SK-N-SH (cell line): ENCODE measurements at regions of chr7 and their contacts with region 1.

Region 1: GRCh38 chr7:12458520-12459131 is 55.0 kb upstream of the VWDE start:
- DNase-seq: peak; percentile 68
- H3K4me3 ChIP-seq: no peak overlapping the region
- H3K27ac ChIP-seq: no peak overlapping the region
- H3K4me1 ChIP-seq: no peaks in the 10 kb centered on the region; a peak in 1 of 4 replicates
- H3K27me3 ChIP-seq: no peaks in the 10 kb centered on the region
- CTCF ChIP-seq: peak; percentile 97
- EP300 ChIP-seq: no peak
- RAD21 ChIP-seq: peak; percentile 93

Region 2: GRCh38 chr7:12423355-12423994 is 35.2 kb before region 1 on chr7:
- CTCF ChIA-PET with region 1: interaction called, 13 read pairs
- POLR2A ChIA-PET with region 1: no interaction called
- DNase-seq: no peak
- H3K4me3 ChIP-seq: no peak overlapping the region
- H3K27ac ChIP-seq: no peak overlapping the region
- H3K4me1 ChIP-seq: peaks cover 0 to 3% of the 10 kb centered on the region in 2 experiments; a peak in 1 of 4 replicates
- H3K27me3 ChIP-seq: no peaks in the 10 kb centered on the region
- CTCF ChIP-seq: no peak
- EP300 ChIP-seq: no peak
- RAD21 ChIP-seq: no peak

Region 3: GRCh38 chr7:12444785-12445184 is 13.8 kb before region 1 on chr7:
- CTCF ChIA-PET with region 1: interaction called, 68 read pairs
- POLR2A ChIA-PET with region 1: no interaction called
- DNase-seq: no peak
- H3K4me3 ChIP-seq: no peak overlapping the region
- H3K27ac ChIP-seq: no peak overlapping the region
- H3K4me1 ChIP-seq: no peaks in the 10 kb centered on the region
- H3K27me3 ChIP-seq: no peaks in the 10 kb centered on the region
- CTCF ChIP-seq: no peak
- EP300 ChIP-seq: no peak
- RAD21 ChIP-seq: no peak

Region 4: DNA sequence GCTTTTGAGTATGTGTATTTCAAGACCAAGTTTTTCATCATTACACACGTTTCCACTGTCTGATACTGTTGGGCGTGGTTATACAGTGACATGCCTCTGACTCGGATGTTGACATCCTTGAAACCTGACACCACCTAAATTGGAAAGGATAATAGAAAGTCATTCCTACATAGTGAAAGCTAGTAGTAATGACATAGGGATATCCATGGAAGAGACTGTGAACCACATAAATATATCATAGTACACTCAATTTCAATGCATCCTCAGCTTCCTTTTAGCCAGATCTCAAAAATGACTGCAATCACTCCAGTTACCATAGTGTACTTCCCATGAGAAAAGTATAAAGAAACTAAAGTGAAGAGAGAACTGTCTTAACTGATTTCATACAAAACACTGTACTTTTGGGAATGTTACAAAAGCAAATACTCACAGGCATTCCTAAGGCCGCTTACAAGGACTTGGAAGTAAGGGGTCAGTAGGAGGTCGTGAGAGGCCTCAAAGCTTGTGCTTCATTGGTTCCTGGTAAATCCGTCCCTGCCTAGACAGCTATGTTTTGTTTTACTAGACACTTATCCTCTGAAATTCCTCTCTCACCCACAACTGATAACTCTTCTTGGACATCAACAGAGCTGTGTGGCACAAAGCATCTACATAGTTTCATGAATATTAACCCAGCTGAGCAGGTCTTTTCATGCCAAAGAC is 16.9 kb after region 1 on chr7:
- CTCF ChIA-PET with region 1: interaction called, 160 read pairs
- POLR2A ChIA-PET with region 1: no interaction called
- DNase-seq: no peak
- H3K4me3 ChIP-seq: no peak overlapping the region
- H3K27ac ChIP-seq: no peak overlapping the region
- H3K4me1 ChIP-seq: no peaks in the 10 kb centered on the region
- H3K27me3 ChIP-seq: no peaks in the 10 kb centered on the region; the same call in 1 of the 2 replicates
- CTCF ChIP-seq: no peak
- EP300 ChIP-seq: no peak
- RAD21 ChIP-seq: no peak

Region 5: DNA sequence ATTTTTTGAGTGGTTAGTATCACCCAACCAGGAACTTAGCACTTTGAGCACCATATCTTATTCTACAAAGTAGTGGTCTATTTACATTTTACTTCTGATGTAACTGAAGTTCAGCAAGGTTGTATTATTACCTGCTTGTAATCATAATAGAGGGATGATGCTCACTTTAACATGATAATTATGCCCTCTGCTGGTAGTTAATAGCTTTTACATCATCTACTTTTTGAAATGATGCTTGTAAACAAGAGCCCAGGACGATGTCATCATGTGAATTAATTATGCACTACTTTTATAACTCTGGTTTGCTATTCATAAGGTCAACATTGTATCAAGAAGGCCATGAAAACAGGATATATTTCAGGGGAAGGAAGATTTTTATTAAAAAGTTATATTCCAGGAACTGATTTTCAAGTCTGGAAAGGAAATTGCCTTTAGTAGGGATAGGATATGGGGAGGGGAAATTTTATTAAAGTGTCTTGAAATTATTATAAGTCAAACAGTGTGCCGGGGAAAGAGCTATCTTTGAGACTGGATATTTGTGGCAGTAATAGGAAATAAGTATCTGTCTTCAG is 31.6 kb after region 1 on chr7:
- CTCF ChIA-PET with region 1: interaction called, 153 read pairs
- POLR2A ChIA-PET with region 1: no interaction called
- DNase-seq: peak; percentile 59
- H3K4me3 ChIP-seq: no peak overlapping the region
- H3K27ac ChIP-seq: no peak overlapping the region
- H3K4me1 ChIP-seq: no peaks in the 10 kb centered on the region; a peak in 1 of 4 replicates
- H3K27me3 ChIP-seq: no peaks in the 10 kb centered on the region
- CTCF ChIP-seq: peak; percentile 82
- EP300 ChIP-seq: no peak
- RAD21 ChIP-seq: peak; percentile 74

Region 6: GRCh38 chr7:12518920-12519681 is 60.5 kb after region 1 on chr7:
- CTCF ChIA-PET with region 1: interaction called, 17 read pairs
- POLR2A ChIA-PET with region 1: no interaction called
- DNase-seq: peak; percentile 35
- H3K4me3 ChIP-seq: no peak overlapping the region
- H3K27ac ChIP-seq: no peak overlapping the region
- H3K4me1 ChIP-seq: no peaks in the 10 kb centered on the region
- H3K27me3 ChIP-seq: no peaks in the 10 kb centered on the region
- CTCF ChIP-seq: peak; percentile 52
- EP300 ChIP-seq: no peak
- RAD21 ChIP-seq: no peak

Region 7: DNA sequence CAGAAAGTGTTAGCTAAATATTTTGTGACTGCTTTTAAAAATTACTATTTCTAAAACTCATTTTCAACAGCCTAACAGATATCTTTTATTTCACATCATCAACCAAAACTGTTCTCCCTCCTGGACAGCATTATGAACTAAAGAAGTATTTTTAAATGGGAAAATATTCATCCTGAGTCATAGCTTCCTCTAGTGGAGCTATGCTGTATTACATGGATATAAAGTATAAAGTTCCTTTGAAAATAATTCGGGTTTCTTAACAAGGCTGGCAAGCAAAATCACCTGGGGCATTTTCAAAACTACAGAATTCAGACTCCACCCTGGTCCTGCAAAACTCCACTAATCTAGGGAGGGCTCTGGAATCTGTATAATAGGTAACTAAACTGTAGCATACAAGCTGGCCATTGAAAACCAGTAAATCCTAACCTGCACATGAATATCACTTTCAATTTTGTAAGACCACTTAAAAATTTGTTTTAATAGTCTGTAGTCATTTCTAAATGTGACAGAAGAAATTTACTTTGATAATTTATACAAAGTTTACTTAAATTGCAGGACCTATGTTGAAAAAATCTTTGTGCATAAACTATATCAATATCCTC is 165.4 kb after region 1 on chr7:
- CTCF ChIA-PET with region 1: interaction called, 11 read pairs
- POLR2A ChIA-PET with region 1: no interaction called
- DNase-seq: peak; percentile 29
- H3K4me3 ChIP-seq: peak overlapping the region in 1 of 2 experiments; percentile 19; a peak in 1 of 4 replicates
- H3K27ac ChIP-seq: no peak overlapping the region
- H3K4me1 ChIP-seq: peaks cover 0 to 4% of the 10 kb centered on the region in 2 experiments; a peak in 1 of 4 replicates
- H3K27me3 ChIP-seq: no peaks in the 10 kb centered on the region
- CTCF ChIP-seq: peak; percentile 99
- EP300 ChIP-seq: no peak
- RAD21 ChIP-seq: peak; percentile 79